CD4-positive, alpha-beta T cell (primary cell): ENCODE measurements at regions of chr13 and their contacts with region 1.

Region 1: GRCh38 chr13:40388617-40389016 is 277.8 kb downstream of the FOXO1 start:
- DNase-seq: peak; percentile 66 to 96 (median 78)
- ATAC-seq: peak; percentile 89
- H3K4me3 ChIP-seq: peak overlapping the region; percentile 57
- H3K4me3 Mint-ChIP-seq: peak overlapping the region; percentile 82
- H3K27ac ChIP-seq: peak overlapping the region; percentile 77 to 96
- H3K27ac Mint-ChIP-seq: peak overlapping the region; percentile 95
- H3K4me1 ChIP-seq: peaks cover 35% of the 10 kb centered on the region
- H3K4me1 Mint-ChIP-seq: peaks cover 54% of the 10 kb centered on the region
- H3K27me3 ChIP-seq: no peaks in the 10 kb centered on the region
- H3K27me3 Mint-ChIP-seq: no peaks in the 10 kb centered on the region
- CTCF ChIP-seq: no peak

Region 2: GRCh38 chr13:38590796-38591507 is 1797.7 kb before region 1 on chr13:
- CTCF ChIA-PET with region 1: no interaction called
- POLR2A ChIA-PET with region 1: no interaction called
- intact Hi-C with region 1: no loop called
- DNase-seq: no peak
- ATAC-seq: no peak
- H3K4me3 ChIP-seq: no peak overlapping the region
- H3K4me3 Mint-ChIP-seq: no peak overlapping the region
- H3K27ac ChIP-seq: no peak overlapping the region
- H3K27ac Mint-ChIP-seq: no peak overlapping the region
- H3K4me1 ChIP-seq: no peaks in the 10 kb centered on the region
- H3K4me1 Mint-ChIP-seq: no peaks in the 10 kb centered on the region
- H3K27me3 ChIP-seq: no peaks in the 10 kb centered on the region
- H3K27me3 Mint-ChIP-seq: peaks cover 18% of the 10 kb centered on the region
- CTCF ChIP-seq: no peak

Region 3: DNA sequence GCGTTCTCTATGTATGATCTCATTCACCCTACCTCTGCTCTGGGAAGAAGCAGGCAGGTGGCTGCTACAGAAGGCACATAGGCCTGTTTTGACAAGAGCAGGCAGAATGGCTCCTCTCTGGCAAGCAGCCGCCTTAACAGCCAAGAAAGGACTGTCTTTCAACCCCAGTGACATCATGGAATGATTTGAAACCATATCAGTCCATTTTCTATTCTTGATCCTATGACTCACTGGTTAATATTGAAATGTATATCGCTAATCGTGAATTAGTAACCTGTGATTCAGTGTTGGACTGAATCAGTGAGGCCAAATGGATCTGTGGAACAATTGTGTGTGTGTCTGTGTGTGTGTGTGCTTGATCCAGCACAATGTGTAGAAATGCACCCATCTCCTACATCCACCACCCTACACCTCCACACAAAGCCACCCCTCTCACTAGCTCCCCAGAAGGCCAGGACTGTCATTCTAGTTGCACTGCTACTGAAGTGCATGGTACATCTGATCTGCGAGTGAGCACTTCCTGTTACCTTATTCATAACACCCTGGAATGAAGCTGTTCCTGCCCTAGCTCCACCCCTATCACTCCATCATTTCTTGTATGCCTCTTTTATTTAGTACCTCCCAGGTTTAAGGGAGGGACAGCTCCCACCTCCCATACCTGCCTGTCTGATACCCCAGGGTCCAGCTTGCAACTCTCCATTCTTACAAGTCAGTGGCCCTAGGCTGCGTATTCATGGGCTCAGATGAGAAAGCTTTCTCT is 182.2 kb before region 1 on chr13:
- CTCF ChIA-PET with region 1: no interaction called
- POLR2A ChIA-PET with region 1: interaction called, 10 read pairs
- intact Hi-C with region 1: no loop called
- DNase-seq: peak in 12 of 14 experiments; percentile 35 to 80 (median 54)
- ATAC-seq: peak; percentile 92
- H3K4me3 ChIP-seq: peak overlapping the region; percentile 10
- H3K4me3 Mint-ChIP-seq: peak overlapping the region; percentile 79
- H3K27ac ChIP-seq: peak overlapping the region; percentile 68 to 77
- H3K27ac Mint-ChIP-seq: peak overlapping the region; percentile 97
- H3K4me1 ChIP-seq: peaks cover 56% of the 10 kb centered on the region
- H3K4me1 Mint-ChIP-seq: peaks cover 80% of the 10 kb centered on the region
- H3K27me3 ChIP-seq: no peaks in the 10 kb centered on the region
- H3K27me3 Mint-ChIP-seq: no peaks in the 10 kb centered on the region
- CTCF ChIP-seq: no peak

Region 4: DNA sequence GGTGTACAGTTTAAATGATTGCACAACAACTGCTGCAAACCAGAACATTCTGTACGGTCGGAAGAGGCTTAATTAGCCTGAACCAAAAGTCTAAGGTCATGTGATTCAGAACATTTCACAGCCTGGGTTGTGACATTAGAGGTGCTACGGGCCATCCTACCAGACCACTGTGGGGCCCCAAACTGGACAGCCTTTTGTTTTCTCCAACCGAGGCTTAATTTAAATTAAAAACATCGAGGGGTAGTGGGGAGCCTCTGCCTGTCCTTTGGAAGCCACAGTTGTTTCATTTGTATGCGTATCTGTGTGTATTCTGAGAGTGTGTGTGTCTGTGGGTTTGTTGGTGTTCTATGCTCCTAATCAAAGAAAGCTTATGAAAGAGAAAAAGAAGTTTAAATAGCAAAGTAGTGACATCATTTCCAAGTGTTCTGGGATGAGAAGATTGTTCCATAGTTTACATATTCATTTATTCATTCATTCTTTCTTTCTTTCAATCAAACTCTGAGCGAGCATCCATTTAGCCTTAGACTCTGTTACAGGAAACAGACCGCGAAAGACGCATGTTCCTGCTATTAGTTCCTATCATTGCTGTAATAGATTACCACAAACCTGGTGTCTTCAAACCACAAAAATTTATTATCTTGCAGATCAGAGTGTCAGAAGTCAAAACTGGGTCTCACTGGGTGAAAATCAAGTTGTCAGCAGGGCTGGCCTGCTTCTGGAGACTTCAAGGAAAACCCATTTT is 167.0 kb before region 1 on chr13:
- CTCF ChIA-PET with region 1: no interaction called
- POLR2A ChIA-PET with region 1: no interaction called
- intact Hi-C with region 1: loop called in 1 of 2 experiments (anchors 5 kb)
- DNase-seq: peak in 11 of 14 experiments; percentile 13 to 87 (median 40)
- ATAC-seq: peak; percentile 83
- H3K4me3 ChIP-seq: peak overlapping the region; percentile 19
- H3K4me3 Mint-ChIP-seq: peak overlapping the region; percentile 68
- H3K27ac ChIP-seq: peak overlapping the region in 1 of 2 donors; percentile 70
- H3K27ac Mint-ChIP-seq: peak overlapping the region; percentile 85
- H3K4me1 ChIP-seq: peaks cover 40% of the 10 kb centered on the region
- H3K4me1 Mint-ChIP-seq: peaks cover 48% of the 10 kb centered on the region
- H3K27me3 ChIP-seq: no peaks in the 10 kb centered on the region
- H3K27me3 Mint-ChIP-seq: no peaks in the 10 kb centered on the region
- CTCF ChIP-seq: no peak

Region 5: GRCh38 chr13:40438999-40439797 is 50.6 kb after region 1 on chr13:
- CTCF ChIA-PET with region 1: no interaction called
- POLR2A ChIA-PET with region 1: interaction called, 4 read pairs
- intact Hi-C with region 1: loop called in 1 of 2 experiments (anchors 5 kb)
- DNase-seq: peak in 4 of 14 experiments; percentile 32 to 53 (median 42)
- ATAC-seq: peak; percentile 61
- H3K4me3 ChIP-seq: peak overlapping the region; percentile 20
- H3K4me3 Mint-ChIP-seq: peak overlapping the region; percentile 74
- H3K27ac ChIP-seq: no peak overlapping the region
- H3K27ac Mint-ChIP-seq: peak overlapping the region; percentile 75
- H3K4me1 ChIP-seq: peaks cover 38% of the 10 kb centered on the region
- H3K4me1 Mint-ChIP-seq: peaks cover 50% of the 10 kb centered on the region
- H3K27me3 ChIP-seq: no peaks in the 10 kb centered on the region
- H3K27me3 Mint-ChIP-seq: no peaks in the 10 kb centered on the region
- CTCF ChIP-seq: no peak

Region 6: DNA sequence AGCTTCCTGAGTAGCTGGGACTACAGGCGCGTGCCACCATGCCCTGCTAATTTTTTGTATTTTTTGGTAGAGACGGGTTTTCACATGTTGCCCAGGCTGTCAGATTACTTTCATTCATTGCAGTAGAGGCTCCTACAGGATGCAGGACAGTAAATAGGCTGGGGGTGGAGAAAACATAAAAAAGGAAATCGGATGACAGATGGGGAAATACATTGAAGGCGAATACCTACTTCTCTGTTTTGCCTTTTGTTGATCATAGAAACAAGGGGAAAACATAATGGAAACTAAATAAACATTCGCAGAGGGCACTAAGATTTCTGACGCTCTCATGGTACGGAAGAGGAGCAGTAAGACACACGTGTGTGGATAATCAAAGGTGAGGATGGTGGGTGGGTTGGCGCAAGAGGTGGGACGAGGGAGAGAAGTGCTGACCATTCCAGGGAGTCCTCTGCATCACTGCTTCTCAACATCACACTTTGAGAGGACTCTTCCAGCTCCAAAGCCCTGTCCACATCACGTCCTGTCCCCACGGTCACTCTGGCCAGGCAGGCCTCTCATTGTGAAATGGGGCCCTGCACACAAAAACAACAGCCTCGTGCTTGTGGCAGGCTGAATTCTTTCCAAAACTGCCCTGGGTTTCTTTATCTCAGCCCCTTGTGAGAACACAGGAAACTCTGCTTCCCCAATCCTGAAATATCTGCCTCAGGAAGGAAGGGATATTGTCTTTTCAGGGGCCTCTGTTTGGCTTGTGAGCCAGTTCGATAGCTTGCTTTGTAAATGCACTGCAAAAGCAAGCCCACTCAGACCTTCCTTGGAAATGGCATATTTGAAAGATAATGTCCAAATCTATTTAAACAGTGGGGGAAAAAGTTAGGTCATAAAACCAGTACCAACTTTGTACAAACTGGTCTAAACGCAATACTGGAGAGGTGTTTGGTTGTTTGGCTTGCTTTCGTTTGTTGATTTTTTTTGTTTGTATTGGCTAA is 89.3 kb after region 1 on chr13:
- CTCF ChIA-PET with region 1: no interaction called
- POLR2A ChIA-PET with region 1: no interaction called
- intact Hi-C with region 1: loop called in 1 of 2 experiments (anchors 5 kb)
- DNase-seq: no peak
- ATAC-seq: no peak
- H3K4me3 ChIP-seq: no peak overlapping the region
- H3K4me3 Mint-ChIP-seq: no peak overlapping the region
- H3K27ac ChIP-seq: no peak overlapping the region
- H3K27ac Mint-ChIP-seq: no peak overlapping the region
- H3K4me1 ChIP-seq: peaks cover 32% of the 10 kb centered on the region
- H3K4me1 Mint-ChIP-seq: peaks cover 73% of the 10 kb centered on the region
- H3K27me3 ChIP-seq: no peaks in the 10 kb centered on the region
- H3K27me3 Mint-ChIP-seq: no peaks in the 10 kb centered on the region
- CTCF ChIP-seq: no peak

Region 7: GRCh38 chr13:40494513-40494912 is 105.9 kb after region 1 on chr13:
- CTCF ChIA-PET with region 1: no interaction called
- POLR2A ChIA-PET with region 1: interaction called, 12 read pairs
- intact Hi-C with region 1: no loop called
- DNase-seq: peak in 4 of 14 experiments; percentile 48 to 68 (median 64)
- ATAC-seq: peak; percentile 55
- H3K4me3 ChIP-seq: peak overlapping the region; percentile 28
- H3K4me3 Mint-ChIP-seq: peak overlapping the region; percentile 86
- H3K27ac ChIP-seq: peak overlapping the region; percentile 50 to 55
- H3K27ac Mint-ChIP-seq: peak overlapping the region; percentile 94
- H3K4me1 ChIP-seq: peaks cover 67% of the 10 kb centered on the region
- H3K4me1 Mint-ChIP-seq: peaks cover 84% of the 10 kb centered on the region
- H3K27me3 ChIP-seq: no peaks in the 10 kb centered on the region
- H3K27me3 Mint-ChIP-seq: no peaks in the 10 kb centered on the region
- CTCF ChIP-seq: no peak

Region 8: DNA sequence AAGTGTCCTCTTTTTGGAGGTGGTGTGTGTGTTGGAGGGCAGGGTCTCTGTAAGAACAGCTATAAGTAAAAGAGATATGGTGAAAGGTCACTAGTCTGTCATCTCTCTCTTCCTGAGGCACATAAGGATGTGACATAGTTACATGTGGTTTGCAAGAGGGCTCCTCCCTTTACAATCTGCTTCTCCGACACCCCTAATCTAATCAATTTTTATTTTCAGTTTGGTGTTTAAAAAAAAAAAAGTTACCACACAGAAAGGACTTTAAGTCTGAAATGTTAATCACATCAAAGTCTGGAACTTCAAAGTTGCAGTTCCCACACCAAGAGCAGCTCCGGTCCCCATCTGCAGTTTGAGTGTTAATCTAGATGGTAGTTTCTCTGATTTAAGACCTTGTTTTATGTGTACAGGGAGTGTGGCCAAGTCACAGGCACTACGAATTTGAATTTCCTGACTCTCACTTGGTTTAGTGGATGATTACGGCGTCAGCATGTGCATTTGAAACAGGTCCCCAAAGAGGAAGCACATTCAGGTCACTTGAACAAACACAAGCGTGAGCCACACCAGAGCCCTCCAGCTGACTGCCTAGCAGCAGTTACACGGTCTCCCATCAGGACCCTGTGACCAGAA is 224.7 kb after region 1 on chr13:
- CTCF ChIA-PET with region 1: no interaction called
- POLR2A ChIA-PET with region 1: no interaction called
- intact Hi-C with region 1: loop called in 1 of 2 experiments (anchors 1 kb)
- DNase-seq: peak; percentile 27 to 89 (median 42)
- ATAC-seq: peak; percentile 81
- H3K4me3 ChIP-seq: peak overlapping the region; percentile 42
- H3K4me3 Mint-ChIP-seq: peak overlapping the region; percentile 73
- H3K27ac ChIP-seq: peak overlapping the region; percentile 70 to 85
- H3K27ac Mint-ChIP-seq: peak overlapping the region; percentile 87
- H3K4me1 ChIP-seq: peaks cover 73% of the 10 kb centered on the region
- H3K4me1 Mint-ChIP-seq: peaks cover 98% of the 10 kb centered on the region
- H3K27me3 ChIP-seq: no peaks in the 10 kb centered on the region
- H3K27me3 Mint-ChIP-seq: no peaks in the 10 kb centered on the region
- CTCF ChIP-seq: no peak